ENCODE measurements at regions of chr1 and their contacts with region 1.

Region 1: DNA sequence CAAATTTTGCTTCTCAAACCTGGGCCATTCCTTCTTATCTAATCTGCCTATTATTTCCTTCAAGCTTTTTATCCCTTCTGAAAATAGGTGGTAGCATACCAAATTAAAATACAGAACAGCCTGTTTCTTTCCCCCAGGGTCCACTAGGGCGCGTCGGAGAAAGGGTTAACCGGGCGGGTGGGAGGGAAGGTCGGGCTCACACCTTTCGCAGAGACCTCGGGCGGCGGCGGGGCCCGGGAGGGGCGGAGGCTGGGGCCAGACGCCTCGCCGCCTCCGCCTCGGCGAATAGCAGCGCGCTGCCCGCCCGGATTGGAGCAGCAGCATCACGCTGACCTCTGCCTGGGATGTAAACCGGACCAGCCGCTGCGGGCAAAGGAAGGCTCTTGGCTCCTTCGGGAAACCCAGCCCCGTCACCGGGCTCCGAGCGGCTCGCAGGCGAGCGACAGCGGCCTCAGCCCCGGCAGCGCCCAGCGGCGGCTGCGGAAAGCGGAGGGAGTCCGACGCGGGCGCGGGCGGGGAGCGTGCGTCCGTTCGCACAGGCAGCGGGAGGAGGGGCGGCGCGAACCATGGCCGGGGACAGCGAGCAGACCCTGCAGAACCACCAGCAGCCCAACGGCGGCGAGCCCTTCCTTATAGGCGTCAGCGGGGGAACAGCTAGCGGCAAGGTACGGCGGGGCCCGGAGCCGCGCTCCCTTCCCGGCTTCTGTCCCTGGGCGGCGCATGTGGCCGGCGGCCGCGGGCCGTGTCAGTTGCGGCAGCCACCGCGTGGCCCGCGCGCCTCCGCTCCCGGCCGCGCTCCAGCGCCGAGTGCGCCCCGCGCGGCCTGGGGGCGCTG is at the start of gene UCK2:
- DNase-seq: peak; percentile 75
- H3K4me3 Mint-ChIP-seq: peak within 1 kb of the TSS; percentile 91
- H3K27ac Mint-ChIP-seq: peak within 1 kb of the TSS; percentile 88
- H3K4me1 Mint-ChIP-seq: peaks cover 9% of the 10 kb centered on the region
- H3K27me3 Mint-ChIP-seq: no peaks in the 10 kb centered on the region
- total RNA-seq, gene UCK2: 60.1 to 61.8 TPM

Region 2: GRCh38 chr1:165697881-165698760 is 129.4 kb before region 1 on chr1 and contains the start of gene ALDH9A1:
- CTCF ChIA-PET with region 1: interaction called, 7 read pairs
- POLR2A ChIA-PET with region 1: interaction called, 13 read pairs
- intact Hi-C with region 1: loop called (anchors 1 kb)
- DNase-seq: peak; percentile 93
- H3K4me3 Mint-ChIP-seq: peak within 1 kb of the TSS; percentile 100
- H3K27ac Mint-ChIP-seq: peak within 1 kb of the TSS; percentile 99
- H3K4me1 Mint-ChIP-seq: peaks cover 25% of the 10 kb centered on the region
- H3K27me3 Mint-ChIP-seq: no peaks in the 10 kb centered on the region
- total RNA-seq, gene ALDH9A1: 34.1 to 43.2 TPM

Region 3: GRCh38 chr1:165842671-165843129 is 15.2 kb after region 1 on chr1:
- CTCF ChIA-PET with region 1: interaction called, 4 read pairs
- POLR2A ChIA-PET with region 1: interaction called, 13 read pairs
- intact Hi-C with region 1: loop called (anchors 1 kb)
- DNase-seq: peak; percentile 56
- H3K4me3 Mint-ChIP-seq: no peak overlapping the region
- H3K27ac Mint-ChIP-seq: peak overlapping the region; percentile 49
- H3K4me1 Mint-ChIP-seq: peaks cover 33% of the 10 kb centered on the region
- H3K27me3 Mint-ChIP-seq: no peaks in the 10 kb centered on the region

Region 4: GRCh38 chr1:165871311-165872067 is 44.0 kb after region 1 on chr1:
- CTCF ChIA-PET with region 1: interaction called, 7 read pairs
- POLR2A ChIA-PET with region 1: interaction called, 5 read pairs
- intact Hi-C with region 1: loop called (anchors 2 kb)
- DNase-seq: peak; percentile 76
- H3K4me3 Mint-ChIP-seq: no peak overlapping the region
- H3K27ac Mint-ChIP-seq: peak overlapping the region; percentile 20
- H3K4me1 Mint-ChIP-seq: peaks cover 34% of the 10 kb centered on the region
- H3K27me3 Mint-ChIP-seq: no peaks in the 10 kb centered on the region

Region 5: DNA sequence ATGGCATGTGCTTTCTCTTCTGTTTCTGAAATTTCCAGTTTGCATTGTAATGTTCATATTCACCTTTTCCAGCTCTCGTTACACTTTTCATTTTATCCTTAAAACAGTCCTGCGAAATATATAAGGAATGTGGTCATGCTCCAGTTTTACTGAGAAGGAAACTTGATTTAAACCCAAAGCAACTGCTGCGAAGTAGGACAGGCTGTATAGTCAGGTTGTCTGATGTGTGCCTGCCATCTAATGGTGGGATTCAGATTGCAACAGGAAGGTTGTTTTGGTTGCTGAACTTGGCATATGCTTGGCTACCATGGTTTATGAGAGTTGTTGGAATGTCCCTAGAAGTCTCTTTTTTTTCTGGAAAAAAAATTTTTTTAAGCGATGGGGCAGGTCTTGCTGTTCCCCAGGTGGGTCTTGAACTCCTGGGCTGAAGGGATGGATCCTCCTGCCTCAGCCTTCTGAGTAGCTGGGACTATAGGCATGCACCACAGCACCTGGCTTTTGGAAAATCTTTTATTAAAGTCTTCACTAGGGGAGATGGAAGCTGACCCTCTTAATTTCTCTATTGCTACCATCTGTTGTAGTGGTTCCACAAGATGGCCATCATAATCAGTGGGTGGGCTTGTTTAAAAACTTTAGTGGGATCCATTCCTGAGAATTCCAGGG is 86.8 kb after region 1 on chr1:
- CTCF ChIA-PET with region 1: interaction called, 6 read pairs
- POLR2A ChIA-PET with region 1: no interaction called
- intact Hi-C with region 1: loop called (anchors 1 kb)
- DNase-seq: peak; percentile 71
- H3K4me3 Mint-ChIP-seq: no peak overlapping the region
- H3K27ac Mint-ChIP-seq: no peak overlapping the region
- H3K4me1 Mint-ChIP-seq: peaks cover 3% of the 10 kb centered on the region
- H3K27me3 Mint-ChIP-seq: no peaks in the 10 kb centered on the region

Measured in activated CD4-positive, alpha-beta memory T cell treated with anti-CD3 and anti-CD28 coated beads for 36 hours (primary cell).